ENCODE measurements at regions of chr16 and their contacts with region 1.

Region 1: GRCh38 chr16:27639561-27640276 is 89.8 kb downstream of the KATNIP start:
- DNase-seq: peak; percentile 47 to 56
- H3K4me3 ChIP-seq: no peak overlapping the region
- H3K4me1 ChIP-seq: no peaks in the 10 kb centered on the region
- H3K27me3 ChIP-seq: no peaks in the 10 kb centered on the region

Region 2: DNA sequence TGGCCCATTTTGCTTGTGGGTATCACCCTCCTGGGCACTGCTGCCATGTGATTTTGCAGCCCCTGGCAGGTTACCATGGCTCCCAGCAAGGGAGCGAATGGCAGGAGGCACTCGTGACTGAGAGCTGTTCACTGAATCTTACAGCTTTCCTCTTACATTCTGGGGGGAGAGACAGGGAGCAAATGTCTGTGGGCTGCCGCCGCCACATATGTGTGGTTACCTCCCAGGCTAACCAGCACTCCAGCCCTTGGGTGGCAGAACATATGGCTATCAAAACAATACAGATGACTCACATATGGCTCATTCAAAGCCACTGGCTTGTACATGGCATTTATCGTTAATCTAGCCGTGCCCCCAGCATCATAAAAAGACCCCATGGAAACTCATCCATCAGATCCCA is 109.8 kb before region 1 on chr16:
- in situ Hi-C with region 1: no loop called
- DNase-seq: no peak
- H3K4me3 ChIP-seq: no peak overlapping the region
- H3K4me1 ChIP-seq: no peaks in the 10 kb centered on the region
- H3K27me3 ChIP-seq: no peaks in the 10 kb centered on the region

Region 3: DNA sequence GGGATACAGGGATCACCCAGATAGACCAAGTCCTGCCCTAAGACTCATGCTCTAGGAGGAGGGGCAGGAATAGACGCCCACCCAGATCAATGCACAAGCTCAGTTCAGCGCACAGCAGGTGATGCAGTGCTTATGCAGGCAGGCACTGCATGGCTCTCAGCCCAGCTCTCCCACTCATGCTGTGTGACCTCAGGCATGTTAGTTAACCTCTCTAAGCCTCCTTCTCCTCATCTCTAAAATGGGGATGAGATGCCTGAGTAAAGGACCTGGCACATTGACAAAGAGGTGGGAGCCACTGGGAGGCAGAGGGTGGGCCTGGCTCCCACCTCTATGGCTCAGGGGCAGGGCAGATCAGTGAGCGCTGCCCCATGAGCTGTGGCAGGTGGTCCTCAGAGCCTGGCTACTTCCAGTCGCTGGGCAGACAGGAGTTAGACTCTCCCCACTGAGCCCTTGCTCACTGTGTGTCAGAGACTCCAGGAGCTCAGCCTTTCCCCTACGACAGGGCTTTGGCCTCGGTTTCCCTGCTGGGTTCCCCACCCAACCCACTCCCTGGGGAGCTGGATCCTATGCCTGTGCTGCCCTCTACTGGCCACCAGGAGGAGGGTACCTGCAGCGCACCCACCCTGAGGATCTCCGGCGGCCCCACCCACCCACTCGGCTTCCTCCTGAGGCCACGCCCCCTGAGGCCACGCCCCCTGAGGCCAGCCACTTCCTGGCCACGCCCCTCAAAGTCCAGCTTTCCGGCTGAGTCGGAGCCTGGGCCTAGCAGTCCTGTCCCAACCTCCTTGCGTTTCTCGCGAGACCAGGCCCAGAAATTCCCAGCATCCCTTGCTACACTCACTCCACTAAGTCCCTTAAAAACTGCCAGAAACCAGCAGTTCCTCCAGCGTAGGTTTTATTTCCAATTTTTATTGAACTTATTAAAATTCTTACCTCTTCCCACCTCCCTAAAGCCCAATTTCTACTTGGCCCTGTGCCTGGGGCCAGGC is 227.7 kb after region 1 on chr16:
- in situ Hi-C with region 1: loop called (anchors 25 kb)
- DNase-seq: peak; percentile 69 to 93
- H3K4me3 ChIP-seq: no peak overlapping the region
- H3K4me1 ChIP-seq: no peaks in the 10 kb centered on the region
- H3K27me3 ChIP-seq: peaks cover 2% of the 10 kb centered on the region; the same call in 1 of the 2 replicates

Measured in HAP-1 (cell line).